ENCODE measurements at regions of chr1 and their contacts with region 1.

Region 1: GRCh38 chr1:154479764-154480421 is 22.1 kb upstream of the TDRD10 start:
- DNase-seq: peak; percentile 73
- H3K4me3 Mint-ChIP-seq: no peak overlapping the region
- H3K27ac Mint-ChIP-seq: no peak overlapping the region
- H3K4me1 Mint-ChIP-seq: peaks cover 28% of the 10 kb centered on the region
- H3K27me3 Mint-ChIP-seq: no peaks in the 10 kb centered on the region

Region 2: GRCh38 chr1:154352581-154353459 is 127.1 kb before region 1 on chr1:
- CTCF ChIA-PET with region 1: interaction called, 3 read pairs
- intact Hi-C with region 1: loop called (anchors 1 kb)
- DNase-seq: peak; percentile 85
- H3K4me3 Mint-ChIP-seq: peak overlapping the region; percentile 82
- H3K27ac Mint-ChIP-seq: peak overlapping the region; percentile 76
- H3K4me1 Mint-ChIP-seq: peaks cover 31% of the 10 kb centered on the region
- H3K27me3 Mint-ChIP-seq: no peaks in the 10 kb centered on the region

Region 3: DNA sequence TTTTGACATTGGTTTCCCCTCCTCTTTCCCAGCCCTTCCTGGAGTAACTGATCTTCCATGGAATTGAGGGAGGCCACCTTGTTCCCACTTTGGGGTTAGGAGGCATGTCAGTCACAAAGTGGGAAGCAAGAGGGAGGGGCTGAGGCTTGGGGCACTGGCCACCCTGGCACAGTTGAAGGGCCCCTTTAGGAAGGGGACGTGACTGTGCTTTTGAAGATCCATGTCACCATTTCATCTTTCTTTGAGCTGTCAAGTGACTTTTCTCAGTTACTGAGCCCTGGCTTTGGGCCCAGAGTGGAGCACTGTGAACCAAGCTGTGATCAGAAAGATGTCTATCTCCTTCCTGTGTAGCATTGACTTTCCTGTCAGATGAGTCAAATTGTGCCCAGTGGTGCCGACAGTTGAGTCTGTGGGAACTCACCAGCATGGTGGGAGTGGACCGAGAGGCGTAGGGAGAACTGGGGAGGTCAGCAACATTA is 16.3 kb before region 1 on chr1:
- CTCF ChIA-PET with region 1: interaction called, 23 read pairs
- intact Hi-C with region 1: loop called (anchors 2 kb)
- DNase-seq: peak; percentile 89
- H3K4me3 Mint-ChIP-seq: no peak overlapping the region
- H3K27ac Mint-ChIP-seq: peak overlapping the region; percentile 78
- H3K4me1 Mint-ChIP-seq: peaks cover 73% of the 10 kb centered on the region
- H3K27me3 Mint-ChIP-seq: no peaks in the 10 kb centered on the region

Region 4: GRCh38 chr1:154878371-154879022 is 398.6 kb after region 1 on chr1:
- CTCF ChIA-PET with region 1: interaction called, 4 read pairs
- intact Hi-C with region 1: loop called (anchors 5 kb)
- DNase-seq: peak; percentile 84
- H3K4me3 Mint-ChIP-seq: no peak overlapping the region
- H3K27ac Mint-ChIP-seq: no peak overlapping the region
- H3K4me1 Mint-ChIP-seq: peaks cover 10% of the 10 kb centered on the region
- H3K27me3 Mint-ChIP-seq: no peaks in the 10 kb centered on the region